Sigmoid colon (tissue), 7 donors: ENCODE measurements at regions of chr1 and their contacts with region 1.

Region 1: GRCh38 chr1:214123061-214123784 is 135.4 kb downstream of the PROX1 start:
- DNase-seq: no peak
- H3K4me3 ChIP-seq: no peak overlapping the region
- H3K27ac ChIP-seq: no peak overlapping the region
- H3K4me1 ChIP-seq: peaks cover 0 to 3% (median 0%) of the 10 kb centered on the region in 4 donors
- H3K27me3 ChIP-seq: no peaks in the 10 kb centered on the region
- CTCF ChIP-seq: peak in 3 of 4 experiments; percentile 39 to 62 (median 43)
- EP300 ChIP-seq: no peak
- POLR2A ChIP-seq: no peak

Region 2: GRCh38 chr1:213122514-213122929 is 1000.7 kb before region 1 on chr1:
- intact Hi-C with region 1: loop called (anchors 5 kb)
- DNase-seq: no peak
- H3K4me3 ChIP-seq: no peak overlapping the region
- H3K27ac ChIP-seq: no peak overlapping the region
- H3K4me1 ChIP-seq: peaks cover 0 to 6% (median 0%) of the 10 kb centered on the region in 4 donors
- H3K27me3 ChIP-seq: no peaks in the 10 kb centered on the region
- CTCF ChIP-seq: peak; percentile 8 to 54 (median 22)
- EP300 ChIP-seq: no peak
- POLR2A ChIP-seq: no peak

Region 3: GRCh38 chr1:213244664-213245091 is 878.5 kb before region 1 on chr1:
- intact Hi-C with region 1: loop called (anchors 2 kb)
- DNase-seq: no peak
- H3K4me3 ChIP-seq: no peak overlapping the region
- H3K27ac ChIP-seq: no peak overlapping the region
- H3K4me1 ChIP-seq: no peaks in the 10 kb centered on the region
- H3K27me3 ChIP-seq: no peaks in the 10 kb centered on the region
- CTCF ChIP-seq: peak in 3 of 4 experiments; percentile 38 to 71 (median 47)
- EP300 ChIP-seq: no peak
- POLR2A ChIP-seq: no peak

Region 4: GRCh38 chr1:213374369-213374768 is 748.9 kb before region 1 on chr1:
- intact Hi-C with region 1: loop called (anchors 2 kb)
- DNase-seq: no peak
- H3K4me3 ChIP-seq: no peak overlapping the region
- H3K27ac ChIP-seq: no peak overlapping the region
- H3K4me1 ChIP-seq: no peaks in the 10 kb centered on the region
- H3K27me3 ChIP-seq: no peaks in the 10 kb centered on the region
- CTCF ChIP-seq: peak in 3 of 4 experiments; percentile 43 to 74 (median 62)
- EP300 ChIP-seq: no peak
- POLR2A ChIP-seq: no peak

Region 5: DNA sequence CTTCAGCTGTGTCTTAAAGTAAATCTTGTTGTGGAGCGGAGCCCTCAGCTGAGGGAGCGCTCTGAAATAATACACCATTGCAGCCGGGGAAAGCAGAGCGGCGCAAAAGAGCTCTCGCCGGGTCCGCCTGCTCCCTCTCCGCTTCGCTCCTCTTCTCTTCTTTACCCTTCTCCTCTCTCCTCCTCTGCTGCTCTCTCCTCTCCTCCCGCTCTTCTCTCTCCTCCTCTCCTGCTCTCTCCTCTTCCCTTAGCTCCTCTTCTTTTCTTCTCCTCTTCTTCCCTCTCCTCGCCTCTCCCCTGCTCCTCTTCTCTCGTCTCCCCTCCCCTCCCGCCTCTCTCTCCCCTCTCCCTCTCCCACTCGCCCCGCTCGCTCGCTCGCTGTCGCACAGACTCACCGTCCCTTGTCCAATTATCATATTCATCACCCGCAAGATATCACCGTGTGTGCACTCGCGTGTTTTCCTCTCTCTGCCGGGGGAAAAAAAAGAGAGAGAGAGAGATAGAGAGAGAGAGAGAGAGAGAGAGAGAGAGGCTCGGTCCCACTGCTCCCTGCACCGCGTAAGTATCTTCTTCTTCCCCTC is 135.2 kb before region 1 on chr1 and contains the start of gene PROX1:
- intact Hi-C with region 1: loop called (anchors 5 kb)
- DNase-seq: peak; percentile 73
- H3K4me3 ChIP-seq: peak within 1 kb of the TSS; percentile 46 to 66 (median 60)
- H3K27ac ChIP-seq: peak within 1 kb of the TSS; percentile 73 to 92 (median 86)
- H3K4me1 ChIP-seq: peaks cover 0 to 50% (median 46%) of the 10 kb centered on the region in 4 donors
- H3K27me3 ChIP-seq: peaks cover 34 to 52% (median 38%) of the 10 kb centered on the region in 3 donors
- CTCF ChIP-seq: no peak
- EP300 ChIP-seq: no peak
- POLR2A ChIP-seq: peak; percentile 72 to 73
- total RNA-seq, gene PROX1: 5.4 to 7.7 (median 6.4) TPM